Dorsolateral prefrontal cortex (tissue), 120 donors: ENCODE measurements at regions of chr2 and their contacts with region 1.

Region 1: GRCh38 chr2:171416009-171416926 is 17.5 kb downstream of the METTL8 start:
- DNase-seq: peak; percentile 50 to 96 (median 90)
- H3K4me3 ChIP-seq: peak overlapping the region in 9 of 59 donors; percentile 4 to 26 (median 12)
- H3K27ac ChIP-seq: peak overlapping the region in 48 of 59 donors; percentile 1 to 85 (median 54)
- H3K27me3 ChIP-seq: no peaks in the 10 kb centered on the region
- CTCF ChIP-seq: peak; percentile 67 to 94 (median 85)

Region 2: DNA sequence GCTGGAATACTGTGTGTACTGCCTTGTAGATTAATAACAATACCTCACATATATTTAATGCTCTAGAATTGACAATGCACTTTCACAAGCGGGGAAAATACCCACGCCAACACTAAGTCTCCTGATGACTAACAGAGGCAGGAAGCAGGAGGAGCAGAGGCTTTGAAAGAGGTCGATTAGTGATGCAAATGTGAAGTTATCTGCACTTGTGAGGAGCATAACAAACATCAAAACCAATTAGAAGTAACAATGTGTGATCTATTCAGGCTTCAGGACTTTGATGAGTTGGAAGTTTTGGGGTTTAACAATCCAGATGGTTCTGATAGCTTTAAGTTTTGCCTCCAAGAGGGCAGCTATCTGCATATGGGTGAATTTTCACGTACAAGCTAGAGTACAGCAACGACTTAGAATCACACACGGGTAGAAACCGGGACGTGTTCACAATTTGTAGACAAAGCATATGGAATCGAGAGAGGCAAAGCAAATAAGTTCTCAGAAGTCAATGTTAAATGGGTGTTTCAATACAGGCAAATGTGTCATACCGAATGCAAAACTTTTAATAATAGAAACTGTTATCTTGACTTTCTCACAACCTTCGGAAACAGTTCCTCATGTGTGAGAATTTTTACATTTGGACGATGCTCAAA is 97.0 kb before region 1 on chr2:
- intact Hi-C with region 1: loop called in 1 of 2 experiments (anchors 2 kb)
- DNase-seq: no peak
- H3K4me3 ChIP-seq: peak overlapping the region in 18 of 59 donors; percentile 1 to 52 (median 22)
- H3K27ac ChIP-seq: peak overlapping the region; percentile 48 to 97 (median 87)
- H3K27me3 ChIP-seq: no peaks in the 10 kb centered on the region
- CTCF ChIP-seq: no peak